ENCODE measurements at regions of chr1 and their contacts with region 1.

Region 1: GRCh38 chr1:226121587-226122400 is 59.3 kb downstream of the H3-3A start:
- DNase-seq: peak; percentile 63 to 81
- ATAC-seq: peak; percentile 47

Region 2: GRCh38 chr1:226062558-226063223 is 59.1 kb before region 1 on chr1 and contains the start of gene H3-3A:
- intact Hi-C with region 1: loop called (anchors 5 to 10 kb)
- DNase-seq: peak; percentile 97 to 100
- ATAC-seq: peak; percentile 81
- total RNA-seq, gene H3-3A: 743 to 759 TPM

Region 3: DNA sequence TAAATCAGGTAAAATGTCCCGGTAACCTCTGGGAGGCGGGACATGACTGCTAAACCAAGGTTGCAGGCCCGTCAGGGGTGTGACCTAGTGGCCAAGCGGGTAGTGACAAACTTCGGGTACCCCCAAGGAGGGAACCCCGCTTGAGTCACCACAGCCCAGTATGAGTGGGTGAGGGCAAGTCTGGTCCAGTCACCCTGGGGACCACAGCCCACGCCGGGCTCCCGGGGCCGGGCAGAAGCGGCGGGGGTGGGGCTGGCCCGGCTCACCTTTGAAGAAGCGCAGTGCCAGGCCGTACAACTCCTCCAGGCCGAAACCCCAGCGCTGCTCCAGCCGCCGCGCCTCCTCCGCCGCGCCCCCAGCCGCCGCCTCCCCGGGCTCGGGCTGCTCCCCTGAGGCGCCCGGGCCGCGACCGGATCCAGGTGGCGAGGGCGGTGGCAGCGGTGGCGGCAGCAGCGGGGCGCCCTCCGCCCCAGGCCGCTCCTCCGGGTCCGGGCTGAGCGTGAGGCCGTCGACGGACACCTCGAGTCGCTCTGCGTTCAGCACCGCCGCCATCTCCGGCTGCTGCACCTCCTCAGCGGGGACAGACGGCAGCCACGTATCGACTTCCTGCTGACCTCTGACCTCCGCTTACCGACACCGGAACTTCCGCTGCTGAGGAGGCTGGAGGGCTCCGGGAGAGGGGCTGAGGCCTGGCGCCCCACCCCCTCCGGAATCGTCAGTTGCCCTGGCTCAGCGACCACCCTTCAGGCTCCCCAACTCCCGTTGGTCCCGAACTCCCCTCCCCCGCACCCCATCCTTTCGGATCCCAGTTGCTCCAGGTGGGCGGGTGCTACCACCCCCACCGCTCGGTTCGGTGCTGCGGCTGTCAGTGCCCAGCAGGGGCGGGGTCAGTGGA is 64.6 kb after region 1 on chr1 and contains the start of gene ACBD3:
- intact Hi-C with region 1: loop called in 1 of 2 experiments (anchors 10 kb)
- DNase-seq: peak; percentile 90 to 91
- ATAC-seq: peak; percentile 93
- total RNA-seq, gene ACBD3: 45.8 to 56.0 TPM

Region 4: DNA sequence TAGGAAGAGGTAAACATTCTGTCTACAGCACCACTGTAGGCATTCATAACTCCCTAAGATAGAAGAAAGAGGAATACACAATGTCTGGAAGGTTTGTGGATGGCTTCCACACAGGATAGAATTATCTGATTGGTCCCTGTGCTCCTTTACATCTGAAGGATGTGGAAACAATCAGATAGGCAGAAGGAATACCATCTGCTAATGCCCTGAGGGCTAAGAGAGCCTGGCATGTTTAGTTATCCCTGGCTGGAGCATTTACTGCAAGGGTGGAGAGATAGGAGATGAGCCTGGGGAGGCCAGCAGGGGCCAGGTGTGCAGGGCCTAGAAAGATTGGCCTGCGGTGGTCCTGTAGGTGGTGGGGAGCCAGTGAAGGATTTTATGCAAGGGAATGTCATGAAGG is 73.3 kb after region 1 on chr1:
- intact Hi-C with region 1: loop called in 1 of 2 experiments (anchors 5 kb)
- DNase-seq: no peak
- ATAC-seq: no peak

Measured in left colon (tissue), 2 donors.